Motor neuron (in vitro differentiated cells): ENCODE measurements at regions of chr6 and their contacts with region 1.

Region 1: GRCh38 chr6:33248925-33249731 is 22.5 kb downstream of the VPS52 start:
- ATAC-seq: peak; percentile 86 to 96 (median 90)
- H3K4me3 ChIP-seq: peak overlapping the region; percentile 38 to 52 (median 45)
- H3K27ac ChIP-seq: peak overlapping the region; percentile 63 to 82
- H3K4me1 ChIP-seq: peaks cover 12 to 14% of the 10 kb centered on the region in 2 donors

Region 2: DNA sequence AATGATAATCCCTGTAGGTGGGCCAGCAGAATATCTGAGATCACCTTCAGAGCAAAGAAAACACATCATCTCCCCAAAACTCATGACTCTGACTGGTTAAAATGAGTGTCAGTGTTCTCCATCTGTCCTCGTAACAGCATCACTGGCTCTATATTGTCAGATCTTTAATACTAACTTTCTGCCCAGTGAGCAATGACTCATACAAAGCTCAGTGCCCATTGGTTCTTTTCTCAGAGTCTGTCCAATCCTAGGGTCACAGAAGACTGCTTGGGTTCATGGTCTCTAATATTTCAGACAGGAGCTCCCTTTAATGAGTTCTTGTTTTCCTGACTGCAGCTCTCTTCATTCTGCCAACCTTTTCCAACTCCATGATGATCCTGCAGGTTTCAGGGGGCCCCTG is 137.0 kb before region 1 on chr6:
- in situ Hi-C with region 1: loop called in 2 of 9 experiments (anchors 25 kb)
- ATAC-seq: peak; percentile 55 to 100 (median 90)
- H3K4me3 ChIP-seq: no peak overlapping the region
- H3K27ac ChIP-seq: no peak overlapping the region
- H3K4me1 ChIP-seq: peaks cover 0 to 5% of the 10 kb centered on the region in 2 donors

Region 3: DNA sequence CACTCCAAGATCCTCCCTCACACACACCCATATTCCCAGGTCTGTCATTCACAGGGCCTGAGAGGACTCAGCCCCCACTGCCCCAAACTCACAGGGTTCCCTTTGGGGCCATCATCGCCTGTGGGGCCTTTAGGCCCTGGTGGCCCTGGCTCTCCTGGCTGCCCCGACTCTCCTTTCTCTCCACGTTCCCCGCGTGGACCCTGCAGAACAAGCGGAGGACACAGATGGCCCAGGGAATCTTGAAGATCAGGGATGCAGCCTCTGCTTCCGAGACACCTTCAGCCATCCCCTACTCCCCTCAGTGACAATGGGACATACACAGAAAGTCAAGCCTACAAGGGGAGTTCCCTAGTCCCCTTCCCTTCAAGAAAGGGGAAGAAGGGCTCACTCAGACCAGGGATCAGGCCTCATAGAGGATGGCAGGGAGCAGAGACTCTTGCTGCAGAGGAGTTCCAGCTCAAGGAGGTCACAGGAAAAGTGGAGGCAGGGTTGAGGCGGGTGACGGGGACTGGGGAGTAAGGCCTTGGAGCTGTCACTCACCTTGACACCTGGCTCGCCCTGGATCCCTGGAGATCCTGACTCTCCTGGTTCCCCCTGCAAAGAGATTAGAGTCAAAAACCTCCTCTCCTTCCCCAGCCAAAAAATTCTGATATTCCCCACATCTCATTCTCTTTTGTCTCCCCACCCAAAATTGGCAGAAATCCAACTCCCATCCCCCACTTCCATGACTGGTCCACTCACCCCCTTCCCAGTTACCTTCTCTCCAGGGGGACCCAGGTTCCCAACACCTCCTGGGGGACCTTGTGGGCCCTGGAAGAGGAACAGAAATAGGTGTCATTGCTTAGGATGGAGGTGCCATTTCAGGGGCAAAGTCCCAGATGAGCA is 79.6 kb before region 1 on chr6:
- in situ Hi-C with region 1: loop called in 1 of 9 experiments (anchors 5 kb)
- ATAC-seq: no peak
- H3K4me3 ChIP-seq: no peak overlapping the region
- H3K27ac ChIP-seq: no peak overlapping the region
- H3K4me1 ChIP-seq: no peaks in the 10 kb centered on the region

Region 4: GRCh38 chr6:33359331-33359730 is 110.2 kb after region 1 on chr6:
- in situ Hi-C with region 1: no loop called
- ATAC-seq: no peak
- H3K4me3 ChIP-seq: no peak overlapping the region
- H3K27ac ChIP-seq: no peak overlapping the region
- H3K4me1 ChIP-seq: peaks cover under 1 to 14% of the 10 kb centered on the region in 2 donors